ENCODE measurements at regions of chr5 and their contacts with region 1.

Region 1: DNA sequence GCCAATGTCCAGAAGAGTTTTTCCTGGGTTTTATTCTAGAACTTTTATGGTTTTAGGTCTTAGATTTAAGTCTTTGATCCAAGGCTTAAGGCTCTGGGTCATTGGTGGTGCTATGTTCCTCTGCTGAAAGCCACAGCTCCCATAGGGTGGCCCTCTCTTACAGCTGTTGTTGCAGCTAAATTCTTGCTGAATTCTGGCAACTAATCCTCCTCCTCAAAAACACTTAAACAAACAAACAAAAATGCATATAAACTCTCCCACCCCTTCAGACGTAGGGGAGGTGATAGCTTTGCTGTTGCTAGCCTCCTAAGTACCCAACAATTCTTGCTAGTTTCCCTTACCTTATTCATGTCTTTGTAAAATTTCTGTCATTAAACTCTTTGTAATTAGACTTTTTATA is 30.2 kb downstream of the IQGAP2 start:
- DNase-seq: no peak
- ATAC-seq: no peak
- H3K4me3 ChIP-seq: no peak overlapping the region
- H3K4me3 Mint-ChIP-seq: no peak overlapping the region
- H3K27ac ChIP-seq: no peak overlapping the region
- H3K27ac Mint-ChIP-seq: peak overlapping the region; percentile 5
- H3K4me1 ChIP-seq: no peaks in the 10 kb centered on the region
- H3K4me1 Mint-ChIP-seq: peaks cover 48% of the 10 kb centered on the region
- H3K27me3 ChIP-seq: no peaks in the 10 kb centered on the region
- H3K27me3 Mint-ChIP-seq: no peaks in the 10 kb centered on the region
- CTCF ChIP-seq: no peak

Region 2: GRCh38 chr5:76393035-76393680 is 40.1 kb before region 1 on chr5:
- CTCF ChIA-PET with region 1: no interaction called
- POLR2A ChIA-PET with region 1: no interaction called
- intact Hi-C with region 1: loop called in 1 of 2 experiments (anchors 1 kb)
- DNase-seq: peak in 6 of 9 experiments; percentile 19 to 62 (median 32)
- ATAC-seq: peak; percentile 84
- H3K4me3 ChIP-seq: no peak overlapping the region
- H3K4me3 Mint-ChIP-seq: peak overlapping the region; percentile 23
- H3K27ac ChIP-seq: peak overlapping the region in 1 of 2 experiments; percentile 51
- H3K27ac Mint-ChIP-seq: peak overlapping the region; percentile 69
- H3K4me1 ChIP-seq: peaks cover 58% of the 10 kb centered on the region
- H3K4me1 Mint-ChIP-seq: peaks cover 65% of the 10 kb centered on the region
- H3K27me3 ChIP-seq: no peaks in the 10 kb centered on the region
- H3K27me3 Mint-ChIP-seq: no peaks in the 10 kb centered on the region
- CTCF ChIP-seq: no peak

Region 3: GRCh38 chr5:76583163-76584047 is 150.1 kb after region 1 on chr5:
- CTCF ChIA-PET with region 1: no interaction called
- POLR2A ChIA-PET with region 1: no interaction called
- intact Hi-C with region 1: no loop called
- DNase-seq: peak in 2 of 9 experiments; percentile 45 to 62
- ATAC-seq: no peak
- H3K4me3 ChIP-seq: no peak overlapping the region
- H3K4me3 Mint-ChIP-seq: no peak overlapping the region
- H3K27ac ChIP-seq: no peak overlapping the region
- H3K27ac Mint-ChIP-seq: no peak overlapping the region
- H3K4me1 ChIP-seq: no peaks in the 10 kb centered on the region
- H3K4me1 Mint-ChIP-seq: peaks cover 8% of the 10 kb centered on the region
- H3K27me3 ChIP-seq: no peaks in the 10 kb centered on the region
- H3K27me3 Mint-ChIP-seq: no peaks in the 10 kb centered on the region
- CTCF ChIP-seq: peak; percentile 72

Measured in CD8-positive, alpha-beta T cell (primary cell).